Activated CD4-positive, alpha-beta T cell treated with anti-CD3 and anti-CD28 coated beads for 36 hours (primary cell): ENCODE measurements at regions of chr3 and their contacts with region 1.

Region 1: GRCh38 chr3:16600780-16601539 is 4.3 kb downstream of the DAZL start:
- DNase-seq: peak; percentile 90
- ATAC-seq: no peak
- H3K4me3 Mint-ChIP-seq: no peak overlapping the region
- H3K27ac Mint-ChIP-seq: no peak overlapping the region
- H3K4me1 Mint-ChIP-seq: peaks cover 22% of the 10 kb centered on the region
- H3K27me3 Mint-ChIP-seq: peaks cover 20% of the 10 kb centered on the region

Region 2: DNA sequence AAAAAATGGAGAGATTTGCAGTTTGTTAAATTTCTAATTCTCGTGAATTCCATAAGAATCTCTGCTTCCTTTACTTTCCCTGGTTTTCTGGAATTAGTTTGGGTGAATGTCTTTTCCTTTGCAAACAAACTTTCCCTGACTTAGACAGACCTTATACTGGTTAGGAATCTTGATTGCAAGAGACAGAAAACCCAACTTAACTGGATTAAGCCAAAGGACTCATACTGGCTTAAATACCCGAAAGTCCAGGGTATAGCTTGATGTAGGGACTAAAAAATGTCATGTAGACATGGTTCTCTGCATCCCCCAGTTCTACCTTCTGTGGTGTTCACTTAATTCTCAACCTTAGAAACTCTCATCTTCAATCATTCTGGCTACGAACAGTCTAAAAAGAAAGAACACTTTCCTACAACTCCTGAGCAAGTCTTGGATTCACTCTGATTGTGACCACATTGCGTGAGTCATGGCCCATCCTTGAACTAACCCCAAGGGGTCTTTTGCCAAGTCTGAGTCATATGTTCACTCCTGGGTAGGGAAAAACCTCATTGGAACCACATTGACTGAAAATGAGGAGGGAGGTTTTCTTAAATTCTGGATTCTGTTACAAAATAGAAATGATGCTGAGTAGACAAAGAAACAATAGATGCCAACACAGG is 140.3 kb after region 1 on chr3:
- CTCF ChIA-PET with region 1: interaction called, 3 read pairs
- POLR2A ChIA-PET with region 1: no interaction called
- intact Hi-C with region 1: loop called in 1 of 2 experiments (anchors 5 kb)
- DNase-seq: peak; percentile 65
- ATAC-seq: peak; percentile 79
- H3K4me3 Mint-ChIP-seq: no peak overlapping the region
- H3K27ac Mint-ChIP-seq: no peak overlapping the region
- H3K4me1 Mint-ChIP-seq: peaks cover 12% of the 10 kb centered on the region
- H3K27me3 Mint-ChIP-seq: peaks cover 2% of the 10 kb centered on the region

Region 3: GRCh38 chr3:16828815-16829214 is 227.9 kb after region 1 on chr3:
- CTCF ChIA-PET with region 1: interaction called, 3 read pairs
- POLR2A ChIA-PET with region 1: no interaction called
- intact Hi-C with region 1: loop called (anchors 2 kb)
- DNase-seq: peak; percentile 73
- ATAC-seq: peak; percentile 51
- H3K4me3 Mint-ChIP-seq: no peak overlapping the region
- H3K27ac Mint-ChIP-seq: no peak overlapping the region
- H3K4me1 Mint-ChIP-seq: peaks cover 16% of the 10 kb centered on the region
- H3K27me3 Mint-ChIP-seq: no peaks in the 10 kb centered on the region

Region 4: GRCh38 chr3:17023006-17023664 is 422.2 kb after region 1 on chr3:
- CTCF ChIA-PET with region 1: interaction called, 4 read pairs
- POLR2A ChIA-PET with region 1: no interaction called
- intact Hi-C with region 1: loop called in 1 of 2 experiments (anchors 5 kb)
- DNase-seq: peak; percentile 70
- ATAC-seq: peak; percentile 94
- H3K4me3 Mint-ChIP-seq: peak overlapping the region; percentile 59
- H3K27ac Mint-ChIP-seq: peak overlapping the region; percentile 88
- H3K4me1 Mint-ChIP-seq: peaks cover 71% of the 10 kb centered on the region
- H3K27me3 Mint-ChIP-seq: no peaks in the 10 kb centered on the region

Region 5: DNA sequence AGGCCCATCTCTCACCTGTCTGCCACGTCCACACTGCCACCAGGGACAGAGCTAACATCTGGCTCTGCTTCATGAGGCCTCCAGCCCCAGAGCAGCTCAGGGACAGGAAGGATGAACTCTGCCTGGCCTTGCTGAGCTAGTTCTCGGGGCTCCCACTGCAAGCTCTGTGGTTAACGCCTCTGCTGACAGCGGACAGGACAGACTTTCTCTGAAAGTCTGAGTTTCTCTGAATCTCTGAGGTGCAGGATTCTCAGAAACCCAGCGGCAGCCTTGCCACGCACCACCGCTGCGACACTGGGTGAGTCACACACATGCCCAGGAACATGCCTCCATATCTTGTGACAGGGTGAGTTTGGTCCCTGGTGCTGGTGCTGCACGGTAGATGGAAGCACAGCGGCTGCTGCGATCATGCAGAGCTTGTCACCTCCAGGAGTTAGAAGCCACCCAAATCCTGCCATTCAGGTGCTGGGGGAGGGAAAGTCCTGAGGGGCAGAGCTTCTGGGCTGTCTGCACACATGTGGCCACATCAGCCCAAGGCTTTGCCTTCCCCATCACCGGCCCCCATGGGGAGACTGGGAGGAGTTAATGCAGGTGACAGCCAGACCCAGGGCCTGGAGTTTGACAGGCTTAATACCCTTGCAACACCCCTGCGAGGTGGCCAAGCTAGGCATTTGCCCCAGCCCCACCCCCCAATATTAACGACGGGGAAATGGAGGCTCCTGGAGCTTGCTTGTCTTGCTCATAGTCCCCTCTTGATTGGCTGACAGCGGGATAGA is 550.8 kb after region 1 on chr3:
- CTCF ChIA-PET with region 1: interaction called, 7 read pairs
- POLR2A ChIA-PET with region 1: no interaction called
- intact Hi-C with region 1: loop called (anchors 2 to 5 kb)
- DNase-seq: peak; percentile 94
- ATAC-seq: peak; percentile 94
- H3K4me3 Mint-ChIP-seq: peak overlapping the region; percentile 52
- H3K27ac Mint-ChIP-seq: peak overlapping the region; percentile 88
- H3K4me1 Mint-ChIP-seq: peaks cover 29% of the 10 kb centered on the region
- H3K27me3 Mint-ChIP-seq: no peaks in the 10 kb centered on the region

Region 6: DNA sequence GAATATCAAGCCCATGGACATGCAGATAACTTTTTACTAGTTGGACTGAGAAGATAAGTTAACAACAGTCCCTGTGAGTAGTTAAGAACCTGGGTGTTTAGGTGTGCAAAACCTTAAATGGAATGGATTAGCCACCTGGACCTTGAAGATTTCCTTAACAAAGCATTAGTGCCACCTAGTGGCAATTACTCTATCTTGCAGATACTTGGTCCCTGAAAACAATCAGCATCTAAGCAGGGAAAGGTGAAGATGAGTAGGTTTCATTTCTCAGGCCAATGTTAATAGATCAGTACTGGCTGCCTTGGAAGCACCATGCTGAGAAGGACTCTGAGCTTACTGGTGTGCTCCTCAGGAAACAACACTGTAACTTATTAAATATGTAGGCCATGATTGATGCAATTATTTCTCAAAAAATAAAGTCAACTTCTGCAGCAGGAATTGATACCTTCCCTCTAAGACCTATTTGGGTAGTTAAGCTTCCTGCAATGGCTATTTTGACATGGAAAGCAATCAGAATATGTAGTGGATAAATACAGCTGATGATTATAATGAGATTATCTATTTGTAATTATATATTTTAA is 812.1 kb after region 1 on chr3:
- CTCF ChIA-PET with region 1: interaction called, 3 read pairs
- POLR2A ChIA-PET with region 1: no interaction called
- intact Hi-C with region 1: loop called (anchors 1 kb)
- DNase-seq: peak; percentile 7
- ATAC-seq: peak; percentile 61
- H3K4me3 Mint-ChIP-seq: no peak overlapping the region
- H3K27ac Mint-ChIP-seq: no peak overlapping the region
- H3K4me1 Mint-ChIP-seq: no peaks in the 10 kb centered on the region
- H3K27me3 Mint-ChIP-seq: no peaks in the 10 kb centered on the region